OCI-LY7 (cell line): ENCODE measurements at regions of chr4 and their contacts with region 1.

Region 1: GRCh38 chr4:172202480-172203076 is 389.4 kb downstream of the GALNTL6 start:
- DNase-seq: peak; percentile 31
- H3K4me3 ChIP-seq: no peak overlapping the region
- H3K27ac ChIP-seq: no peak overlapping the region
- H3K4me1 ChIP-seq: no peaks in the 10 kb centered on the region
- CTCF ChIP-seq: peak; percentile 79

Region 2: DNA sequence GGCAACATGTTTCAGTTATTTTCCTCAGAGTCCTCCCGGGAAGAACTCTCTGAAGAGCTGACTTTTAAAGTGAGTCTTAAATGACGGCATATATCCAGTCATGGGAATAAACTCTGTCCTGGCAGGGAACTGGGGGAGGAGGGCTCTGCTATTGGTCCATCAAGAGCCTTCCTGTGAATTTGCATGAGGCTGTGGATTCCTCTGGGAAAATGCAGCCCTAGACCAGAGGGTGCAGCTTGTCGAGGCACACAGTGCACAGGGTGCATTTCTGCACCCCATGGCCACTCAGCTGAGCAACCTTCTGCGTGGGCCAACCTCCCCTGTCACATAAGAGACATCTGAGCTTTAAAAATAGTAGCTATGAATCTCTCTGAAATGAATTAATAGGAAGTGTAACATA is 29.4 kb before region 1 on chr4:
- CTCF ChIA-PET with region 1: no interaction called
- POLR2A ChIA-PET with region 1: no interaction called
- intact Hi-C with region 1: no loop called
- DNase-seq: no peak
- H3K4me3 ChIP-seq: no peak overlapping the region
- H3K27ac ChIP-seq: no peak overlapping the region
- H3K4me1 ChIP-seq: no peaks in the 10 kb centered on the region
- CTCF ChIP-seq: no peak

Region 3: DNA sequence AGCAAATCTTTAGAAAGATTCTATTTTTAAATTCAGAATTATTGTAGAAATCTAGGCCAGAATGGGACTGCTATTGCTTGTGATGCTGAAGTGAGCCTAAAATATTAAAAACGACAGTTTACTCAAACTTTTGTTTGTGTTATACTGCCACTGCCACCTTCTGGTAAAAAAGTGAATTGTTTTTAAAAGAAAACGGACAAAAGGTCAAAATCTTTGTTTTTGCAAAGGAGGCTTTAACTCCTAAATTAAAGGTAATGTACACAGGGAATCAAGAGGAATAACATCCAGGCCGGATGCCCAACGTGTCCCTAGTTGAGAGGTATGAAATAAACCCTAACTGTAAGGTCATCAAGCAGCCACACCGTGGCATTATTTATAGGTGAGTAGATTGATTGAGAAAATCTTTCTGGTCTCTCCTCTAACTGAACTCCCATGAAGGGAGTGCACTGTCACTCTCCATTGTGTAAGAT is 627.8 kb after region 1 on chr4:
- CTCF ChIA-PET with region 1: no interaction called
- POLR2A ChIA-PET with region 1: no interaction called
- intact Hi-C with region 1: loop called (anchors 10 kb)
- DNase-seq: peak; percentile 43
- H3K4me3 ChIP-seq: no peak overlapping the region
- H3K27ac ChIP-seq: no peak overlapping the region
- H3K4me1 ChIP-seq: no peaks in the 10 kb centered on the region
- CTCF ChIP-seq: peak; percentile 91